PC-9 (cell line): ENCODE measurements at regions of chr16 and their contacts with region 1.

Region 1: GRCh38 chr16:28950648-28951409 is at the start of gene NFATC2IP:
- DNase-seq: peak; percentile 100
- H3K4me3 ChIP-seq: peak within 1 kb of the TSS; percentile 84
- H3K27ac ChIP-seq: peak within 1 kb of the TSS; percentile 38; the same call in 1 of the 2 replicates
- H3K4me1 ChIP-seq: peaks cover 16% of the 10 kb centered on the region
- H3K27me3 ChIP-seq: no peaks in the 10 kb centered on the region
- CTCF ChIP-seq: no peak
- total RNA-seq, gene NFATC2IP: 72.3 and 73.0 TPM in 2 replicates

Region 2: DNA sequence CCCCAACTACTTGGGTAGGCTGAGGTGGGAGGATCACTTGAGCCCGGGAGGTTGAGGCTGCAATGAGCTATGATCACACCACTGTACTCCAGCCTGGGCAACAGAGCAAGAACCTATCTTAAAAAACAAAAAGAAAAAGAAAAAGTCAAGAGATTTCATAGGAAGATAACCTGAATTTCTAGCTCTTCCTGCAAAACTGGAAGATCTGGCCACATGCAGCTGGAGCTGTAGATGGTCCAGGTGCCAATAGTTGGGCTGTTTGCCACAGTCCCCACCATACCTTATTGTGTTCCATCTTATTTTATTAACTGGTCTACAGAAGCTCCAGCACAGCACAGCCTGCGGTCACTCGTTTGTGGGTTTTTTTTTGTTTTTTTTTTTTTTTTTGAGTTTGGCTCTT is 57.5 kb before region 1 on chr16:
- CTCF ChIA-PET with region 1: interaction called, 10 read pairs
- POLR2A ChIA-PET with region 1: no interaction called
- intact Hi-C with region 1: no loop called
- DNase-seq: no peak
- H3K4me3 ChIP-seq: no peak overlapping the region
- H3K27ac ChIP-seq: no peak overlapping the region
- H3K4me1 ChIP-seq: no peaks in the 10 kb centered on the region
- H3K27me3 ChIP-seq: no peaks in the 10 kb centered on the region
- CTCF ChIP-seq: no peak

Region 3: DNA sequence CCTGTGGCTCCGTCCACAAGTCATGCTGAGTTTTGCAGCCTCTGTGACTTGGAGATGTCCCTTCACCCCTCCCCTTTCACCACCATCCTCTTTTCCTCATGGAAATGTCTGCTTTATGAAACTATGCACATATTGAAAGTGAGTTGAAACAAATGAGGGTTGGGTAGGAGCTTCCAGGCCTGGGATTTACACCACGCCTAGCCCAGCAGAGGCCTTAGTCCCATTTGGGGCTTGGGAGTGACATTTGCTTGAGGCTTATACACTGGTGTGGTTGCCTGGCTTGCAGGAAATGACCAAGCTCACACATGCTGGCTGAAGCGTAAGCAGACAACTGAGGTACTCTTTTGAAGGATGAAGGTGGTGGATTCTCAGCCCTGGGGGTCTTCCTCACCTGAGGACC is 13.2 kb after region 1 on chr16:
- CTCF ChIA-PET with region 1: no interaction called
- POLR2A ChIA-PET with region 1: no interaction called
- intact Hi-C with region 1: no loop called
- DNase-seq: no peak
- H3K4me3 ChIP-seq: no peak overlapping the region
- H3K27ac ChIP-seq: no peak overlapping the region
- H3K4me1 ChIP-seq: no peaks in the 10 kb centered on the region
- H3K27me3 ChIP-seq: no peaks in the 10 kb centered on the region
- CTCF ChIP-seq: no peak